OCI-LY7 (cell line): ENCODE measurements at regions of chr11 and their contacts with region 1.

Region 1: DNA sequence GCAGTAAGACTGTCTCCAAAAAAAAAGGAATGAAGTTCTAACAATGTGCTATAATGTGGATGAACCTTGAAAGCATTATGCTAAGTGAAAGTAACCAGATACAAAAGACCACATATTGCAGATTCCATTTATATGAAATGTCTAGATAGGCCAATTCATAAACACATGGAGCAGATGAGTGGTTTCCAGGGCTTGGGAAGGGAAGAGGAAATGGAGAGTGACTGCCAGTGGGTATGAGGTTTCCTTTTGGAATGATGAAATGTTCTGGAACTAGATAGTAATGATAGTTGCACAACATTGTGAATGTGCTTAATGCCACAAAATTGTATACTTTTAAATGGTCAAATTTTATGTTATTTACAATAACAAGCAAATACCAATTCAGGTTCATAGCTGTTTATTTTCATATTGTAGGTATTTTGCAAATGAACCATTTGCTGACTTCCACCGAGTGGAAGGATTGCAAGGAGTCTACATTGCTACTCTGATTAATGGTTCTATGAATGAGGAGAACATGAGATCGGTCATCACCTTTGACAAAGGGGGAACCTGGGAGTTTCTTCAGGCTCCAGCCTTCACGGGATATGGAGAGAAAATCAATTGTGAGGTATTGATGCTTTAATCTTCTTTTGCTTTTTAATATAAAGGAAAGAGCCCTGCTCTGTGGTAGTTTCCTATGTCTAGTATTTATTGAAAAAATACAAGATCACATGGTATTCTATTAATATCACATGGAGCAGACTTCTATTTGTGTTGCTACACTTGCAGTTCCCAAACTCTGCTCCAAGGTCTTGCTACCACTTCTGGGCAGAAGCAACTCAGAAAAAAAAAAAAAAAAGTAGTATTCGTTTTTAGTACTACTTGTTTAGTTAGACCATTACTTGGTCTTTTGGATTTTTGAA is 67.7 kb upstream of the SORL1-AS1 start:
- DNase-seq: no peak
- H3K4me3 ChIP-seq: no peak overlapping the region
- H3K27ac ChIP-seq: peak overlapping the region; percentile 14
- H3K4me1 ChIP-seq: peaks cover 13% of the 10 kb centered on the region
- CTCF ChIP-seq: no peak

Region 2: GRCh38 chr11:121508449-121508848 is 12.0 kb before region 1 on chr11:
- CTCF ChIA-PET with region 1: interaction called, 5 read pairs
- POLR2A ChIA-PET with region 1: interaction called, 11 read pairs
- intact Hi-C with region 1: no loop called
- DNase-seq: no peak
- H3K4me3 ChIP-seq: no peak overlapping the region
- H3K27ac ChIP-seq: no peak overlapping the region
- H3K4me1 ChIP-seq: peaks cover 8% of the 10 kb centered on the region
- CTCF ChIP-seq: no peak